K562 (cell line): ENCODE measurements at regions of chr7 and their contacts with region 1.

Region 1: GRCh38 chr7:73522105-73522872 is at the start of gene BAZ1B:
- DNase-seq: peak; percentile 97 to 100 (median 99)
- ATAC-seq: peak; percentile 93
- H3K4me3 ChIP-seq: peak within 1 kb of the TSS; percentile 95
- H3K27ac ChIP-seq: peak within 1 kb of the TSS; percentile 97
- H3K4me1 ChIP-seq: peaks cover 28 to 34% of the 10 kb centered on the region in 2 experiments
- H3K27me3 ChIP-seq: no peaks in the 10 kb centered on the region
- CTCF ChIP-seq: peak in 2 of 3 experiments; percentile 10 to 29; a peak in 1 of 6 replicates
- EP300 ChIP-seq: peak; percentile 41
- POLR2A ChIP-seq: peak; percentile 89
- RAD21 ChIP-seq: no peak; a peak in 2 of 4 replicates
- polyA plus RNA-seq, gene BAZ1B: 15.0 to 27.5 TPM

Region 2: GRCh38 chr7:73504017-73504416 is 18.3 kb before region 1 on chr7:
- CTCF ChIA-PET with region 1: no interaction called
- POLR2A ChIA-PET with region 1: interaction called, 12 read pairs
- in situ Hi-C with region 1: no loop called
- intact Hi-C with region 1: no loop called
- DNase-seq: no peak
- ATAC-seq: no peak
- H3K4me3 ChIP-seq: no peak overlapping the region
- H3K27ac ChIP-seq: no peak overlapping the region
- H3K4me1 ChIP-seq: no peaks in the 10 kb centered on the region; a peak in 1 of 5 replicates
- H3K27me3 ChIP-seq: no peaks in the 10 kb centered on the region
- CTCF ChIP-seq: no peak
- EP300 ChIP-seq: no peak
- POLR2A ChIP-seq: no peak
- RAD21 ChIP-seq: no peak

Region 3: DNA sequence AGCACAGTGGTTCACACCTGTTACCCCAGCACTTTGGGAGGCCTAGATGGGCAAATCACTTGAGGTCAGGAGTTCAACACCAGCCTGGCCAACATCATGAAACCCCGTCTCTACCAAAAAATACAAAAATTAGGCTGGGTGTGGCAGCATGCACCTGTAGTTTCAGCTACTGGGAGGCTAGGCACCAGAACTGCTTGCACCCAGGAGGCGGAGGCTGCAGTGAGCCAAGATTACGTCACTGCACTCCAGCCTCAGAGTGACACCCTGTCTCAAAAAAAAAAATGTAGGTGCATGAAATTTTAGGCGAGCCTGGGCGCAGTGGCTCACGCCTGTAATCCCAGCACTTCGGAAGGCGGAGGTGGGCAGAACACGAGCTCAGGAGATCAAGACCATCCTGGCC is 25.6 kb after region 1 on chr7:
- CTCF ChIA-PET with region 1: interaction called, 3 read pairs
- POLR2A ChIA-PET with region 1: interaction called, 22 read pairs
- in situ Hi-C with region 1: no loop called
- intact Hi-C with region 1: no loop called
- DNase-seq: no peak
- ATAC-seq: no peak
- H3K4me3 ChIP-seq: no peak overlapping the region
- H3K27ac ChIP-seq: no peak overlapping the region
- H3K4me1 ChIP-seq: peaks cover 0 to 4% of the 10 kb centered on the region in 2 experiments; a peak in 2 of 5 replicates
- H3K27me3 ChIP-seq: no peaks in the 10 kb centered on the region
- CTCF ChIP-seq: no peak
- EP300 ChIP-seq: no peak
- POLR2A ChIP-seq: no peak
- RAD21 ChIP-seq: no peak

Region 4: GRCh38 chr7:73557108-73557396 is 34.8 kb after region 1 on chr7:
- CTCF ChIA-PET with region 1: interaction called, 3 read pairs
- POLR2A ChIA-PET with region 1: interaction called, 10 read pairs
- in situ Hi-C with region 1: no loop called
- intact Hi-C with region 1: loop called (anchors 2 kb)
- DNase-seq: peak; percentile 97 to 99 (median 97)
- ATAC-seq: peak; percentile 96
- H3K4me3 ChIP-seq: peak overlapping the region; percentile 95
- H3K27ac ChIP-seq: peak overlapping the region; percentile 99
- H3K4me1 ChIP-seq: peaks cover 28 to 33% of the 10 kb centered on the region in 2 experiments
- H3K27me3 ChIP-seq: no peaks in the 10 kb centered on the region
- CTCF ChIP-seq: no peak
- EP300 ChIP-seq: no peak; the same call in 1 of the 2 replicates
- POLR2A ChIP-seq: no peak
- RAD21 ChIP-seq: no peak

Region 5: DNA sequence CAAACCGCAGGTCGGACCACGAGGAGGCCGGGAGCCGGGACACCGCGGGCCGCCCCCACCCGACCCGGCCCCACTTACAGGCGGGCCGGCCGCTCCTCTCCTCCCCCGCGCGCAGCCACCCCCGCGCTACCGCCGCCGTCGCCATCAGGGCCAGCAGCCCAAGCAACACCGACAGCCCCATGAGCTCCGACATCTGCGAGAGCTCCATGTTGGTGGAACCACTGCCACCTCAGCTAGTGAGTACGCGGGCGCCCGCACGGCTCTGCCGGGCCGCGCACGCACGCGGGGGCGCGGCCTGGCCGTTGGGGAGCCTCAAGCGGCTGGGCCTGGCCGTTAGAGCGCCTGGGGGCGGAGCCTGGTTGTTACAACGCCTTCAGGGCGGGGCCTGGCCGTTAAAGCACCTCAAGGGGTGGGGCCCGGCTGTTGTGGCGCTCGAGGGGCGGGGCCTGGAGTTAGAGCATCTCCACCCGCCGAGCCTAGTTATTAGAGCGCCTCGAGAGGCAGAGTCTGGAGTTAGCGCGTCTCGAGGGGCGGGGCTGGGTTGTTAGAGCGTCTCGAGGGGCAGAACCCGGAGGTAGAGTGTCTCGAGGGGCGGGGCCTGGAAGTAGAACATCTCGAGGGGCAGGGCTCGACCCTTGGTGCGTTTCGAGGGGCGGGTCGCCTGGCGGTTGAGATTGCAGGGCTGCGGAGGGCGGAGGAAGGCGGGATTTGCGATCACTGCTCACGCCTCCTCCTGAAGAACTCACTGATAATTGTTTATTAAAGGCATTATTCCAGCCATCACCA is 56.2 kb after region 1 on chr7 and contains the start of gene TBL2:
- CTCF ChIA-PET with region 1: no interaction called
- POLR2A ChIA-PET with region 1: interaction called, 17 read pairs
- in situ Hi-C with region 1: no loop called
- intact Hi-C with region 1: loop called (anchors 2 kb)
- DNase-seq: peak; percentile 96 to 100 (median 98)
- ATAC-seq: peak; percentile 91
- H3K4me3 ChIP-seq: peak within 1 kb of the TSS; percentile 70
- H3K27ac ChIP-seq: peak within 1 kb of the TSS; percentile 87
- H3K4me1 ChIP-seq: peaks cover 34 to 61% of the 10 kb centered on the region in 2 experiments
- H3K27me3 ChIP-seq: no peaks in the 10 kb centered on the region
- CTCF ChIP-seq: peak in 2 of 3 experiments; percentile 57 to 64; a peak in 4 of 6 replicates
- EP300 ChIP-seq: peak; percentile 72
- POLR2A ChIP-seq: peak; percentile 96
- RAD21 ChIP-seq: peak in 1 of 2 experiments; percentile 19; a peak in 1 of 4 replicates
- polyA plus RNA-seq, gene TBL2: 2.5 to 3.0 TPM